MCF 10A (cell line): ENCODE measurements at regions of chr6 and their contacts with region 1.

Region 1: DNA sequence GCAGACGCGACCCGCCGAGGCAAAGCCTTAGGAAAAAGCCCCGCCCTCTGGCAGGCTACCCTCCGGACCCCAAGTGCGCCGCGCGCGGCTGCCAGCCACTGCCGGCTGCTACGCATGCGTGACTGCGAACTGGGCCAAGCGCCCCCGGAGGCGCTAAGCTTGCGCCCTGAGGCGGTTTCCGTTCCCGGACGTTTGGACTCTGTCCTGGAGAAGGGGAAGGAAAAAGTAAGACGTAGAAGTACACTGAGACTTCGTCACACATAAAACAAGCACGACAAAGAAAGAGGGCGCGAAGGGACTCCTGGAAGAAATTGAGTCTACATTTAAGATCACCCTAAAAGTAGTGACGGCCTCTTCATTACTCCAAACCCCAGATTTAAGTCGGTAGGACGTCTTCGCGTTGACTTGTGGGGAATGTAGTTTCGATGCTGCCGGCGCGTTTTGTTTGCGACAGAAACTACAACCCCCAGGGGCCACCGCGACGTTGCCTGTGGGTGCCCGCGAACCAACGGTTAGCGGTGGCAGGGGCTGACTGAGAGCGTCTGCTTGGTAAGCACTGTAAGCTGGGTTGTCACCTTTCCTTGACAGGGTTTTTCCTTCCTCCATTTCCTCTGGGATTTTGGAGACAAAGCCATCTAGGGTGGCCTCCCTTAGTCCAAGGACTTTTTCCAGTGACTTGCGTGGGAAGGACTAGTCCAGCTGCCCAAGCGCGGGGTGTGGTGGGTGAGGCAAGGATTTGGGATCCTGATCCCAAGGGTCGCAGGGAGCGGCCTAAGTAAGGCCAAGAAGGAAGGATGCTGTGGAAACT is at the start of gene CEP57L1:
- DNase-seq: peak; percentile 96
- H3K4me3 Mint-ChIP-seq: peak within 1 kb of the TSS; percentile 92
- H3K27ac Mint-ChIP-seq: peak within 1 kb of the TSS; percentile 98
- H3K4me1 Mint-ChIP-seq: peaks cover 36% of the 10 kb centered on the region
- H3K27me3 Mint-ChIP-seq: no peaks in the 10 kb centered on the region
- CTCF ChIP-seq: no peak
- total RNA-seq, gene CEP57L1: 16.7 and 18.9 TPM in 2 replicates

Region 2: DNA sequence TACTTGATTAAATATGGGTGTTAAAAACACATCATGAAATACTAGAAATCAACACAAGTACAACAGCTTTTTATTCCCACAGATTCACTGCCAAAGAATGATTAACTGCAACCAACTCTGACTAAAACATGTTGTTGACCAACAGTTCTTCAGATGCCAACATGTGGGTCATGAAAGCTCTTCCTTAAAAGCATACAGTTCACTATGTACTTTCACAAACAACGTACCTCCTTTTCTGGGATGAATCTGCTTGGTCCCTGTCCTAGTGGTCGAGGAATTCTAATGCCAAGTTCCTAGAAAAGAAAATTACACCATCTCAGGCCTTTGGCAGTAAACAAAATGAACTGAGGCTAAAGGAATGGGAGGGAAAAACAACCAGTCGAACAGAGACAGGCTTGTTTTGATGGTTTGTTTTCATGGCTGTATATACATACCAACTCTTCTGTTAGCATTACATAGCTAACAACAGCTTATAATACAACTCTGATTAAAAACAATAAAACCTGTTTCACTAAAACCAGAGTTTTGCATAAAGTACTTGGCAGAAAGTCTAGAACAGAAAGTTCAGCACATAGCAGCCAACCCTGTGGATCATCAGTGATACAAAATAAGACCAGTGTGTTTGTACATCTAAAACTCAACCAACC is 93.1 kb before region 1 on chr6:
- CTCF ChIA-PET with region 1: no interaction called
- POLR2A ChIA-PET with region 1: interaction called, 11 read pairs
- intact Hi-C with region 1: no loop called
- DNase-seq: peak; percentile 88
- H3K4me3 Mint-ChIP-seq: peak overlapping the region; percentile 62
- H3K27ac Mint-ChIP-seq: peak overlapping the region; percentile 77
- H3K4me1 Mint-ChIP-seq: peaks cover 34% of the 10 kb centered on the region
- H3K27me3 Mint-ChIP-seq: no peaks in the 10 kb centered on the region
- CTCF ChIP-seq: no peak

Region 3: GRCh38 chr6:109050012-109050411 is 45.2 kb before region 1 on chr6:
- CTCF ChIA-PET with region 1: no interaction called
- POLR2A ChIA-PET with region 1: interaction called, 14 read pairs
- intact Hi-C with region 1: no loop called
- DNase-seq: peak; percentile 41
- H3K4me3 Mint-ChIP-seq: no peak overlapping the region
- H3K27ac Mint-ChIP-seq: peak overlapping the region; percentile 70
- H3K4me1 Mint-ChIP-seq: peaks cover 25% of the 10 kb centered on the region
- H3K27me3 Mint-ChIP-seq: no peaks in the 10 kb centered on the region
- CTCF ChIP-seq: no peak

Region 4: DNA sequence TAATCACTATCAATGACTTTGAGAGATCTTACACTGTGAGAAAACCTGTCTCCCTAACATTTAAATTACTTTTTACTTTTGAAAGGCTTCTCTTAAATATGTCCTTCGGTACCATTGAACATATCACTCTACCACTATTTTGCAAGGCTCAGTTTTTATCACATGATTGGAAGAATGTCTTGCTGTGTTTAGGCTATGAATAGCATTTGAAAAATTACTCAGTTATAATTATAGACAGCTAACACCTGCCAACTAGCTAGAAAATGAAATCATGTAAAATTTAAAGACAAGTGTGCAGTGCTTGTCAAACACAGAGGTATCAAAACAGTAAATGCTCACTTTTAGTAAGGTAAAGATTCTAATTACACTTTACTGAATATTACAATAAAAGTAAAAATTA is 11.6 kb before region 1 on chr6:
- CTCF ChIA-PET with region 1: no interaction called
- POLR2A ChIA-PET with region 1: interaction called, 23 read pairs
- intact Hi-C with region 1: no loop called
- DNase-seq: no peak
- H3K4me3 Mint-ChIP-seq: no peak overlapping the region
- H3K27ac Mint-ChIP-seq: no peak overlapping the region
- H3K4me1 Mint-ChIP-seq: no peaks in the 10 kb centered on the region
- H3K27me3 Mint-ChIP-seq: no peaks in the 10 kb centered on the region
- CTCF ChIP-seq: no peak

Region 5: GRCh38 chr6:109397020-109397419 is 301.8 kb after region 1 on chr6:
- CTCF ChIA-PET with region 1: no interaction called
- POLR2A ChIA-PET with region 1: no interaction called
- intact Hi-C with region 1: loop called (anchors 1 kb)
- DNase-seq: peak; percentile 35
- H3K4me3 Mint-ChIP-seq: no peak overlapping the region
- H3K27ac Mint-ChIP-seq: no peak overlapping the region
- H3K4me1 Mint-ChIP-seq: peaks cover 12% of the 10 kb centered on the region
- H3K27me3 Mint-ChIP-seq: no peaks in the 10 kb centered on the region
- CTCF ChIP-seq: peak; percentile 18

Region 6: DNA sequence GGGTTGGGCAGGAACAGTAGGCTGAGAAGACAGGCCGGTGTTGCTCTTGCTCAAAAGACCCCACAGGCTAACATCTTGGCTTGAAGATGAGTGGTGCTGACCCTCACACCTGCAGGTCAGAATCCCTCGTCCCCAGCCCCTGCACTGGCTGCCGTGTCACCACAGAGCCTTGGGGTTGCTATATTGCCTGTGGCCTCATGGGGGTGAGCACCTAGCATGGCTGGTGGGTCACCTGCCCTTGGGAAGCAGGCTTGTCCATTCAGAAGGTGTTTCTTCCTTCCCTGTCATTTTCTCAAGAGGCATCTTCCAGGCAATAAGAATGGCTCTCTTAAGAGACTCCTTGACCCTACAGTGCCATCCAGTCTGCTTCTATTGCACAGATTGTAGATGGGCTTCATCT is 1373.5 kb after region 1 on chr6:
- CTCF ChIA-PET with region 1: no interaction called
- POLR2A ChIA-PET with region 1: no interaction called
- intact Hi-C with region 1: no loop called
- DNase-seq: no peak
- H3K4me3 Mint-ChIP-seq: no peak overlapping the region
- H3K27ac Mint-ChIP-seq: no peak overlapping the region
- H3K4me1 Mint-ChIP-seq: no peaks in the 10 kb centered on the region
- H3K27me3 Mint-ChIP-seq: peaks cover 37% of the 10 kb centered on the region
- CTCF ChIP-seq: no peak